B cell (primary cell): ENCODE measurements at regions of chr1 and their contacts with region 1.

Region 1: GRCh38 chr1:84077476-84078107 is 66.5 kb upstream of the PRKACB start:
- DNase-seq: peak; percentile 85
- ATAC-seq: peak; percentile 93
- H3K4me3 ChIP-seq: peak overlapping the region; percentile 41 to 86 (median 68)
- H3K4me3 Mint-ChIP-seq: peak overlapping the region; percentile 84
- H3K27ac ChIP-seq: peak overlapping the region; percentile 46 to 70
- H3K27ac Mint-ChIP-seq: peak overlapping the region; percentile 67
- H3K4me1 ChIP-seq: peaks cover 7 to 12% of the 10 kb centered on the region in 2 donors
- H3K4me1 Mint-ChIP-seq: peaks cover 13% of the 10 kb centered on the region
- H3K27me3 ChIP-seq: no peaks in the 10 kb centered on the region
- H3K27me3 Mint-ChIP-seq: no peaks in the 10 kb centered on the region
- CTCF ChIP-seq: no peak

Region 2: DNA sequence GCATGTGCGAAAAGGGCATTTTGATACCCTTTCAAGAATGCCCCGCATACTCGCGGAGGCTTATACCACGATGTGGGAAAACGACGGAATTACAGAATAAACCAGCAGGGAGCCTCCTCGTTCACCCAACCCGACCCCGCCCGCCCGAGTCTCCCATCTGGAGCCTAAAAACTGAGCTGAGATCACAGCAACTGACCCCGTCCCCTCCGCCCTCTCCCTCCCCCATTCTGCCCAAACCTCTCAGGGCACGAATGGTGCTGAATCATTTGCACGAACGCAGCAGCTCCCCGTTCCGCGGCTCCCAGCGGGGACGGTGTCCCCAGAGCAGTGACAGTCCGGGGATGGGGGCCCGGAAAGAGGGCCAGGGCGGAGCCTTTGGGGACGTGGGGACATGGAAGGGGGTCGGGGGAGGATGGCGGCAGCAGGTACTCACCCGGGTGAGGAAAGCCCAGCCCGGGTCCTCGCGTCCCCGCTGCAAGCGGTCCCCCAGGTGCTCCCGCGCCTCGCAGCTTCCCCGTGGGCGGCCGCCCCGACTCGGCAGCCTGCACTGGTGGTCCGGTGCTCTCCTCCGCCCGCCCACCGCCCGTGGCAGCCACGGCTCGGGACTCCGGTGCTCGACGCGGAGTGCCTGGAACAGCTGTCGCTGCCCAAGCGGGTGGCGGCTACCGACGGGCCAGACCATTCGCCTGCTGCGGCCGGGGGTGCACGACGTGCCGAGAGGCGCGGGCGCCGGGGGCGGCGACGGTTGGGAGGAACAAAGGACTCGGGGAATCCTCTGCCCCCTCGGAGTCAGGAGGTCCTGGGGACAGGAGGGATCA is 78.9 kb before region 1 on chr1 and contains the start of gene TTLL7:
- CTCF ChIA-PET with region 1: no interaction called
- POLR2A ChIA-PET with region 1: interaction called, 6 read pairs
- intact Hi-C with region 1: loop called (anchors 5 kb)
- DNase-seq: peak; percentile 77
- ATAC-seq: peak; percentile 81
- H3K4me3 ChIP-seq: peak within 1 kb of the TSS; percentile 30 to 72 (median 65)
- H3K4me3 Mint-ChIP-seq: peak within 1 kb of the TSS; percentile 88
- H3K27ac ChIP-seq: peak within 1 kb of the TSS in 1 of 2 donors; percentile 40
- H3K27ac Mint-ChIP-seq: no peak within 1 kb of the TSS
- H3K4me1 ChIP-seq: peaks cover 10 to 15% of the 10 kb centered on the region in 2 donors
- H3K4me1 Mint-ChIP-seq: peaks cover 14% of the 10 kb centered on the region
- H3K27me3 ChIP-seq: peaks cover 0 to 56% (median 38%) of the 10 kb centered on the region in 4 experiments
- H3K27me3 Mint-ChIP-seq: peaks cover 55% of the 10 kb centered on the region
- CTCF ChIP-seq: no peak
- total RNA-seq, gene TTLL7: 0.15 TPM in 1 of 2 replicates, not detected in the other

Region 3: DNA sequence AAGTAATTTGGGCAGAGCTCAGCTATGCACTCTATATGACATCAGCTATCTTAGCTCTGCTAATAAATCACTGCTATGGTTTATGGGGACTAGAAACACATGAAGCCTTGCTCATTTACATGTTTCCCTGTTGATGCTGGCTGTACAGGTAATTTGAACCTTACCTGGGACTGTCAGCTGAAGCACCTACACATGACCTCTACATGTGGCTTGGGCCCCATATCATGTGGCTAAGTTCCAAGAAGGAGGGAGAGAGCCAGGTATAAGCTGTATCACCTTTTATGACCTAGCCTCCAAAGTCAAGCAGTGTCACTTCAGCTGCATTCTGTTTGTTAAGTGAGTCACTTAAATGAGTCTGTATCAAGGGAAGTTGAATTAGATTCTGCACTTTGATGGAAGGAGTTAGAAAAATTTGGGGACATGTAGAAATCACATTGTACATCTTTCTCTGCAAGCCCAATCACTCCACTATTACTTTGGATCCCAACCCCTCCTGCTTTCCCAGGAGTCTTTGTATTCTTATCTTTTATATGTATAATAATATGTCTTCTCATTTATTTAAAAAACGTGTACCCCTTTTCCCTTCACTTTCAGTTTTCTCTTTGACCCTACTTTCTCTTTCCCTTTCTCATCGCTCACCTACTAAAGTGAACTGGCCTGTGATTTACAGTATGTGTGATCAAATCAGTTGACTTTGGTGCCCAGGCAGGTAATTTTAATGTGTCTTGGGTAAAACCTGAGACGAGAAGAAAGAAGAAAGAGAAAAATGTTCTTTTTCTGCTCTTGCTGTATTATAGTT is 13.1 kb after region 1 on chr1:
- CTCF ChIA-PET with region 1: no interaction called
- POLR2A ChIA-PET with region 1: no interaction called
- intact Hi-C with region 1: loop called (anchors 1 kb)
- DNase-seq: peak; percentile 55
- ATAC-seq: peak; percentile 49
- H3K4me3 ChIP-seq: peak overlapping the region in 4 of 5 experiments; percentile 11 to 57 (median 50)
- H3K4me3 Mint-ChIP-seq: peak overlapping the region; percentile 72
- H3K27ac ChIP-seq: peak overlapping the region; percentile 45 to 61
- H3K27ac Mint-ChIP-seq: peak overlapping the region; percentile 43
- H3K4me1 ChIP-seq: peaks cover 6 to 12% of the 10 kb centered on the region in 2 donors
- H3K4me1 Mint-ChIP-seq: peaks cover 17% of the 10 kb centered on the region
- H3K27me3 ChIP-seq: no peaks in the 10 kb centered on the region
- H3K27me3 Mint-ChIP-seq: no peaks in the 10 kb centered on the region
- CTCF ChIP-seq: no peak